Heart right ventricle (tissue), 16 donors: ENCODE measurements at regions of chr11 and their contacts with region 1.

Region 1: GRCh38 chr11:130124096-130124495 is 35.5 kb upstream of the ST14 start:
- DNase-seq: peak; percentile 53 to 72
- ATAC-seq: peak; percentile 81 to 99 (median 86)
- H3K4me3 ChIP-seq: no peak overlapping the region
- H3K27ac ChIP-seq: peak overlapping the region in 7 of 10 donors; percentile 27 to 83 (median 54)
- H3K4me1 ChIP-seq: peaks cover 0 to 75% (median 38%) of the 10 kb centered on the region in 9 donors
- H3K27me3 ChIP-seq: no peaks in the 10 kb centered on the region
- CTCF ChIP-seq: no peak

Region 2: GRCh38 chr11:129574431-129574830 is 549.7 kb before region 1 on chr11:
- intact Hi-C with region 1: no loop called
- DNase-seq: no peak
- ATAC-seq: no peak
- H3K4me3 ChIP-seq: no peak overlapping the region
- H3K27ac ChIP-seq: no peak overlapping the region
- H3K4me1 ChIP-seq: no peaks in the 10 kb centered on the region
- H3K27me3 ChIP-seq: peaks cover 0 to 4% (median 0%) of the 10 kb centered on the region in 7 donors
- CTCF ChIP-seq: no peak

Region 3: GRCh38 chr11:129992161-129992944 is 131.7 kb before region 1 on chr11:
- intact Hi-C with region 1: loop called in 1 of 10 experiments (anchors 5 kb)
- DNase-seq: no peak
- ATAC-seq: peak in 5 of 8 donors; percentile 41 to 69 (median 64)
- H3K4me3 ChIP-seq: no peak overlapping the region
- H3K27ac ChIP-seq: no peak overlapping the region
- H3K4me1 ChIP-seq: peaks cover 3 to 29% (median 20%) of the 10 kb centered on the region in 9 donors
- H3K27me3 ChIP-seq: no peaks in the 10 kb centered on the region
- CTCF ChIP-seq: peak in 7 of 9 donors; percentile 7 to 53 (median 22)

Region 4: DNA sequence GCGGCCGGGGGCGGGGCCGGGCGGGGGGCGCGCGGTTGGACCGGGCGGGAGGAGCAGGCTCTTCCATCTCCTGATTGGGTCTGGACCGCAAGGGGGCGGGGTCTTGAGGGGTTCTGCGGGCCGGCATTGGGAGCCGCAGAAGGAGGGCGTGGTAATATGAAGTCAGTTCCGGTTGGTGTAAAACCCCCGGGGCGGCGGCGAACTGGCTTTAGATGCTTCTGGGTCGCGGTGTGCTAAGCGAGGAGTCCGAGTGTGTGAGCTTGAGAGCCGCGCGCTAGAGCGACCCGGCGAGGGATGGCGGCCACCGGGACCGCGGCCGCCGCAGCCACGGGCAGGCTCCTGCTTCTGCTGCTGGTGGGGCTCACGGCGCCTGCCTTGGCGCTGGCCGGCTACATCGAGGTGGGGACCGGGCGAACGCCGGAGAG is 54.4 kb before region 1 on chr11 and contains the start of gene APLP2:
- intact Hi-C with region 1: loop called in 5 of 10 experiments (anchors 5 to 10 kb)
- DNase-seq: peak; percentile 99 to 100
- ATAC-seq: peak; percentile 94 to 98 (median 96)
- H3K4me3 ChIP-seq: peak within 1 kb of the TSS; percentile 64 to 86 (median 80)
- H3K27ac ChIP-seq: peak within 1 kb of the TSS; percentile 81 to 99 (median 95)
- H3K4me1 ChIP-seq: peaks cover 0 to 34% (median 21%) of the 10 kb centered on the region in 9 donors
- H3K27me3 ChIP-seq: no peaks in the 10 kb centered on the region
- CTCF ChIP-seq: no peak
- total RNA-seq, gene APLP2: 265 to 414 (median 309) TPM